PC-9 (cell line): ENCODE measurements at regions of chr2 and their contacts with region 1.

Region 1: DNA sequence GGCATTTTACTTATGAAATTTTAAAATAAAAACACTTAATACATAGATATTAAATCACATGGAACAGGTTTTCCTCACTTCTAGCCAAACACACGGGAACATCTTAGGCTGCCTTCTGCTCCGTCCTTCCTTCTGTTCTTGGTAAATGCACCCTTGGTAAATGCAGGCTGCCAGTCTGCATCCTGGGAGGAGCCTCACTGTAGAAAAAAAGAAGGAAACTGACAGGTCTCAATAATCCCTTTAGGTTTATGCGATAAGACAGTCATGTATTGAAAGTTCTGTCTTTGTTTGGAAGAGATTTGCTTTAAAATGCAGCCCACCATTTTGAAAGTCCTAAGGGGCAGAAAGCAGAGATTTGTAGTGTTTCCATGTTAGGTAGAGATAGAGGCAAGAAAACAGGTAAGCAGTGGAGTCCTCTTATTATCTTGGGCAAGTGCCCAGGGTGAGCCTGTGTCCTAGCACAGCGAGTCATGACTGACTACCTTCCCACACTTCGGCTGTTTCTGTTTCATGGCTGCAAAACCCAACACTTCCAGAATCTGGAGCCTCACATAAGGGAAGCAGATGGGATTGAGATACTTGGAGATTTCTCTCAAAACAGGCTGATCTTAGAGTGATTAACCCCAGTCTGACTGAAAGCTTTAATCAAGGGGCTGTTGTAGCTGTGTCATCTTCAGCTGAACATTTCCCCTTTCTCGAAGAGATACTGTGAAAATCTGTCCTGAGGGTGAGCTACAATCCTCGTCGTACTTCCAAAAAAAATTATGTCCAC is 131.4 kb upstream of the MAP3K20 start:
- DNase-seq: no peak
- H3K4me3 ChIP-seq: no peak overlapping the region
- H3K27ac ChIP-seq: no peak overlapping the region
- H3K4me1 ChIP-seq: no peaks in the 10 kb centered on the region
- H3K27me3 ChIP-seq: no peaks in the 10 kb centered on the region
- CTCF ChIP-seq: no peak

Region 2: GRCh38 chr2:174403628-174404027 is 1459.4 kb after region 1 on chr2:
- CTCF ChIA-PET with region 1: no interaction called
- POLR2A ChIA-PET with region 1: interaction called, 11 read pairs
- intact Hi-C with region 1: no loop called
- DNase-seq: no peak
- H3K4me3 ChIP-seq: no peak overlapping the region
- H3K27ac ChIP-seq: no peak overlapping the region
- H3K4me1 ChIP-seq: no peaks in the 10 kb centered on the region
- H3K27me3 ChIP-seq: no peaks in the 10 kb centered on the region
- CTCF ChIP-seq: no peak